ENCODE measurements at regions of chr4 and their contacts with region 1.

Region 1: GRCh38 chr4:165537028-165537648 is 158.3 kb downstream of the CPE start:
- DNase-seq: peak in 1 of 2 donors; percentile 6
- ATAC-seq: peak in 3 of 8 donors; percentile 38 to 50 (median 47)
- H3K4me3 ChIP-seq: no peak overlapping the region
- H3K27ac ChIP-seq: no peak overlapping the region
- H3K4me1 ChIP-seq: no peaks in the 10 kb centered on the region
- H3K27me3 ChIP-seq: peaks cover 0 to 5% (median 0%) of the 10 kb centered on the region in 7 donors
- CTCF ChIP-seq: peak; percentile 49 to 88 (median 77)

Region 2: DNA sequence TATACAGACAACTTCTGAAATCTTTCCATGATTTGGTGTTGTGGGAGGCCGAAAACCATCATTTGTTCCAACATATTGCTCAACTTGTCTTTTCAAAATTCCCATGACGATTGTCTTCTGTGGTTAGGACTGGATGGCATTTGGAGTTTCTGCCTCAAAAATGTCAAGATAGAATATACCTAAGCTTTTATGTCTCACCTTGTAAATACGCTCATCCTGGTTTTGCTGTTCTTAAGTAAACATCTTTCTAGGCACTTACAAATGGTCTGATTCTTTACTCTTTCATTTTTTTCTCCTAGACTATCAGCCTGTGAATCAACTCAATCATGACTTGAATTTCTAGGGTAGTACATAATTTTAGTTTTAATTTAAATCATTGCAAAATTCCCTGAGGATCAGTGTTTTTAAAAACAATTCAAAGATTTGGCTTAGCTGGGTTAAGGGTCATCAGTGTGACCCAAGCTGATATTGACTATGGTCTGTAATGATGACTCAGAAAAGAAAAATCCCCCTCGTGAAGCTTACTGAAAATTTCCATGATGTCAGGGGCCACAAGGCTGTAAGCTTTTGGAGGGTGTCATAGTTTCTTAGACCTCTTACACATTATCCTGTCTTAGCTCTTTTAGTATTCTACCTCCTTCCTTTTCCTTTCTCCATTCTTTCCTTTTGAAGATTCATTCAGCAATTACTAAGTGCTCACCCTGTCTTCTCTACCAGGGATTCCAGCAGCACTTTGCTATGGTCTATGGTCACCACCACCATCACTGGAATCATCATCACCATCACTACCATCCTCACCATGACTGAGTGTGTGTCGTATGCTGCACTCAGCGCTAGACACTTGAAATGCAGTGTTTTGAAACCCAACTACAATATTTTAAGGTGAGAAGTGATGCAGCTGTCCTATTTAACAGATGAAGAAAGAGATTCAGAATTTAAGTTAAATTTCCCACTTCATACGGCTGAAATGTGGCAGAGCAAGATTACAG is 33.9 kb before region 1 on chr4:
- intact Hi-C with region 1: no loop called
- DNase-seq: no peak
- ATAC-seq: peak in 3 of 8 donors; percentile 26 to 68 (median 67)
- H3K4me3 ChIP-seq: no peak overlapping the region
- H3K27ac ChIP-seq: peak overlapping the region in 2 of 10 donors; percentile 35 to 74
- H3K4me1 ChIP-seq: peaks cover 0 to 15% (median 0%) of the 10 kb centered on the region in 9 donors
- H3K27me3 ChIP-seq: peaks cover 0 to under 1% (median 0%) of the 10 kb centered on the region in 7 donors
- CTCF ChIP-seq: no peak

Region 3: GRCh38 chr4:165692082-165692481 is 154.9 kb after region 1 on chr4:
- intact Hi-C with region 1: loop called in 1 of 10 experiments (anchors 10 kb)
- DNase-seq: no peak
- ATAC-seq: no peak
- H3K4me3 ChIP-seq: no peak overlapping the region
- H3K27ac ChIP-seq: no peak overlapping the region
- H3K4me1 ChIP-seq: peaks cover 0 to 6% (median 0%) of the 10 kb centered on the region in 9 donors
- H3K27me3 ChIP-seq: no peaks in the 10 kb centered on the region
- CTCF ChIP-seq: no peak

Region 4: DNA sequence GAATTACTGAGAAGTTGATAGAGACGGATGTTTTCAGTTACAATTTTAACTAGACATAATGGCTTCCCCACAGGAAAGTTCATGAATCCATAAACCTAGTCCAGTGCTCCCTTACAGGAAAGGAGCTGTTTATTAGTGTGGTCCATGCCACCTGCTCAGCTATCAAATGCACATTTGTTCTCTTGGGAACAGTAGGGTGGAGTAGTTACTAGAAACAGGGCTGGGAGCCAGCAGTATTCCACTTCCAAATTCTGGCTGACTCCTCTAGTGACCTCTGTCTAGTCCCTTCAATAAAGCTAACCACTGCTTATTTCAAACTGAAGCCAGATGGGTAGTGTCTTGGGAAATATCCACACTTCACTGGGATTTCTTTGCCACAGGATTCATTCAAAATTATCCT is 247.5 kb after region 1 on chr4:
- intact Hi-C with region 1: loop called in 1 of 10 experiments (anchors 10 kb)
- DNase-seq: peak in 1 of 2 donors; percentile 80
- ATAC-seq: peak; percentile 75 to 98 (median 94)
- H3K4me3 ChIP-seq: no peak overlapping the region
- H3K27ac ChIP-seq: peak overlapping the region in 3 of 10 donors; percentile 5 to 59 (median 46)
- H3K4me1 ChIP-seq: peaks cover 0 to 38% (median 27%) of the 10 kb centered on the region in 9 donors
- H3K27me3 ChIP-seq: no peaks in the 10 kb centered on the region
- CTCF ChIP-seq: no peak

Region 5: GRCh38 chr4:165864271-165864670 is 327.1 kb after region 1 on chr4:
- intact Hi-C with region 1: loop called in 2 of 10 experiments (anchors 5 to 10 kb)
- DNase-seq: no peak
- ATAC-seq: no peak
- H3K4me3 ChIP-seq: no peak overlapping the region
- H3K27ac ChIP-seq: no peak overlapping the region
- H3K4me1 ChIP-seq: no peaks in the 10 kb centered on the region
- H3K27me3 ChIP-seq: no peaks in the 10 kb centered on the region
- CTCF ChIP-seq: peak in 1 of 9 donors; percentile 15

Region 6: GRCh38 chr4:166091912-166092510 is 554.9 kb after region 1 on chr4:
- intact Hi-C with region 1: loop called (anchors 1 to 5 kb)
- DNase-seq: no peak
- ATAC-seq: no peak
- H3K4me3 ChIP-seq: no peak overlapping the region
- H3K27ac ChIP-seq: no peak overlapping the region
- H3K4me1 ChIP-seq: no peaks in the 10 kb centered on the region
- H3K27me3 ChIP-seq: peaks cover 0 to 3% (median 0%) of the 10 kb centered on the region in 7 donors
- CTCF ChIP-seq: peak; percentile 64 to 92 (median 74)

Measured in heart right ventricle (tissue), 16 donors.